ENCODE measurements at regions of chr1 and their contacts with region 1.

Region 1: DNA sequence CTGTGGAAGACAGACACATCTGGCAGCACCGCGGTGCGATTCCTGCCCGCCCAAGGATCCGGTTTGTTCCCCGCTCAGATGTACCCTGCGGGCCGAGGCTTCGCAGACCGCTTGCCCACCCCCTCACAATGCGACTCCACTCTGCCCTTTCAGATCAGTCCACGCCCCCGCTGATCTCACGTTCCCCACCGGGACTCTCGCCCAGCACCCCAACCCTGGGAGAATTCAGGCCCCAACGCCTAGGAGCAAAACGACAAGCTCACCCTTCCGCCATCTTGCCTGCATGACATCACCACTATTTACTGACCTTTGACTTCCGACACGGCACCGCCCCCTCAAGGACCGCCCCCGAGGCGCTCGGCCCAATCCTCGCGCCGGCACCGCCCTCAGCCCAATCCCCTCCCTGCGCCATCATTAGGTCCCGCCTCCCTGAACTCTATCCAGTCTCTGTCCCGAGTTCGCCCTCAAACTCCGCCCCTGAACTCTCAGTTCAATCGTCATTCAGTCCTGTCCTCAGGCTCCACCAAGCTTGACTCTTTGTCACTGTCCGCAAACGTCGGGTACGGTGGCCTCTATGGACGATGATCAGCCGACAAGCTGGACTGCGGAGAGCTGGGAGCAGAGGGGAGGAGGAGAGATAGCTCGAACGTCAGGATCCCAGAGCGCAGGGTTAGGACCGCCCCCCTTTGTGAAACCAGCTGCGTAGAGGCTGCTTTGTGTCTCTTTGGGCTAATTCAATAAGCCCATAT is at the start of gene BSDC1:
- DNase-seq: peak; percentile 98 to 99 (median 99)
- H3K4me3 ChIP-seq: peak within 1 kb of the TSS; percentile 87
- H3K4me3 Mint-ChIP-seq: peak within 1 kb of the TSS; percentile 99 to 100 (median 100)
- H3K27ac ChIP-seq: peak within 1 kb of the TSS; percentile 95
- H3K27ac Mint-ChIP-seq: peak within 1 kb of the TSS; percentile 92 to 100 (median 100)
- H3K4me1 ChIP-seq: peaks cover 43% of the 10 kb centered on the region
- H3K4me1 Mint-ChIP-seq: peaks cover 5 to 25% (median 19%) of the 10 kb centered on the region in 4 donors
- H3K27me3 ChIP-seq: no peaks in the 10 kb centered on the region
- H3K27me3 Mint-ChIP-seq: peaks cover 0 to 1% of the 10 kb centered on the region in 2 donors
- total RNA-seq, gene BSDC1: 106 to 112 TPM

Region 2: DNA sequence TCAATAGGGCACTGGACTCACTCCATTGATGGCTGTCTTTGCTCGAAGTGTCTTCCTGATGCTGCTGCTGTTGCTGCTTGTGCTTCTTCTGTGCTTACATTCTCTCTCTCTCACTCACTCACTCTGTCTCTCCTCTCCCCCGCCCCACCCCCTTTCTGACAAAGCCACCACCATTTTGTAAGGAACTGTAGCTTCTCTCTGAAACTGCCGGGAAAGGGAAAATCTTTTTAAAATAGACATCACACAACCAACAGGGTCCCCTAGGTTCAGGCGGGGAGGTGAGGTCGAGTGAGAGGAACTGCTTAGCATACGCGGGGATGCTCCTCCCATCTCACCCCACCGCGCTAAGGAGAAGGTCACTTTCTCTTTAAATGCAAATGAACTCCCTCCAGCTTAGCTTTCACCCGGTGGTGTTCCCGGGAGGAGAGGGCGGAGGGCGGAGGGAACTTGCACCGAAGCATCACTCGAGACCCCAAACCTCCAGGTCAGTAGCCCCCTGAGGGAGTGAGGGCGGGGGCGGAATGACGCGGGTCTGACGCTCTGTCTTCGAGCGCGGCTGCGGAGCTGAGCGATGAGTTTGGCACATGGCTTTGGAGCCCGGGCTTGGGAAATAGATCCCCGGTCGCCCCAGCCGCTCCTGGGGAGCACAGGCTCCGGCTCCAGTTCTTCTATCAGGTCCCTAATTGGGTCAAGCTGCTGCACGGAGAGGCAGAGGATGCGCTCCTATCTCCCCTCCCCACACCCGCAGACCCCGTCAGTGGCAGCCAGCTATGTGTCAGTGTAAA is 193.9 kb before region 1 on chr1 and contains the start of gene CCDC28B:
- CTCF ChIA-PET with region 1: interaction called, 3 read pairs
- POLR2A ChIA-PET with region 1: interaction called, 11 read pairs
- intact Hi-C with region 1: no loop called
- DNase-seq: peak; percentile 51 to 73 (median 58)
- H3K4me3 ChIP-seq: peak within 1 kb of the TSS; percentile 57 to 85
- H3K4me3 Mint-ChIP-seq: peak within 1 kb of the TSS; percentile 85 to 95 (median 92)
- H3K27ac ChIP-seq: peak within 1 kb of the TSS; percentile 84
- H3K27ac Mint-ChIP-seq: peak within 1 kb of the TSS; percentile 87 to 97 (median 95)
- H3K4me1 ChIP-seq: peaks cover 59% of the 10 kb centered on the region
- H3K4me1 Mint-ChIP-seq: peaks cover 38 to 76% (median 56%) of the 10 kb centered on the region in 4 donors
- H3K27me3 ChIP-seq: no peaks in the 10 kb centered on the region
- H3K27me3 Mint-ChIP-seq: no peaks in the 10 kb centered on the region
- total RNA-seq, gene CCDC28B: 4.2 to 5.1 TPM

Region 3: GRCh38 chr1:32351399-32352238 is 42.7 kb before region 1 on chr1:
- CTCF ChIA-PET with region 1: interaction called, 5 read pairs
- POLR2A ChIA-PET with region 1: interaction called, 6 read pairs
- intact Hi-C with region 1: loop called (anchors 1 kb)
- DNase-seq: peak; percentile 90 to 94 (median 91)
- H3K4me3 ChIP-seq: peak overlapping the region; percentile 52 to 65
- H3K4me3 Mint-ChIP-seq: peak overlapping the region; percentile 71 to 90 (median 82)
- H3K27ac ChIP-seq: peak overlapping the region; percentile 71
- H3K27ac Mint-ChIP-seq: peak overlapping the region; percentile 86 to 97 (median 92)
- H3K4me1 ChIP-seq: peaks cover 39% of the 10 kb centered on the region
- H3K4me1 Mint-ChIP-seq: peaks cover 22 to 62% (median 39%) of the 10 kb centered on the region in 4 donors
- H3K27me3 ChIP-seq: no peaks in the 10 kb centered on the region
- H3K27me3 Mint-ChIP-seq: no peaks in the 10 kb centered on the region

Region 4: GRCh38 chr1:32900951-32901822 is 506.9 kb after region 1 on chr1 and contains the start of gene TMEM54:
- CTCF ChIA-PET with region 1: no interaction called
- POLR2A ChIA-PET with region 1: no interaction called
- intact Hi-C with region 1: no loop called
- DNase-seq: no peak
- H3K4me3 ChIP-seq: no peak within 1 kb of the TSS
- H3K4me3 Mint-ChIP-seq: peak within 1 kb of the TSS; percentile 72 to 87 (median 76)
- H3K27ac ChIP-seq: no peak within 1 kb of the TSS
- H3K27ac Mint-ChIP-seq: peak within 1 kb of the TSS in 2 of 7 donors; percentile 37 to 73
- H3K4me1 ChIP-seq: peaks cover 9% of the 10 kb centered on the region
- H3K4me1 Mint-ChIP-seq: peaks cover 2 to 14% (median 9%) of the 10 kb centered on the region in 4 donors
- H3K27me3 ChIP-seq: peaks cover 13% of the 10 kb centered on the region
- H3K27me3 Mint-ChIP-seq: peaks cover 30 to 42% of the 10 kb centered on the region in 2 donors
- total RNA-seq, gene TMEM54: not detected